ENCODE measurements at regions of chr5 and their contacts with region 1.

Region 1: GRCh38 chr5:59380350-59380951 is 513.1 kb downstream of the PDE4D start:
- DNase-seq: no peak
- H3K4me3 ChIP-seq: no peak overlapping the region
- H3K27ac ChIP-seq: peak overlapping the region in 1 of 2 donors; percentile 48
- H3K4me1 ChIP-seq: no peaks in the 10 kb centered on the region
- H3K27me3 ChIP-seq: no peaks in the 10 kb centered on the region
- CTCF ChIP-seq: peak; percentile 47 to 70 (median 60)
- POLR2A ChIP-seq: no peak

Region 2: GRCh38 chr5:59188419-59189225 is 191.8 kb before region 1 on chr5:
- intact Hi-C with region 1: loop called (anchors 5 kb)
- DNase-seq: peak; percentile 61 to 75
- H3K4me3 ChIP-seq: peak overlapping the region in 1 of 2 donors; percentile 6
- H3K27ac ChIP-seq: peak overlapping the region; percentile 50 to 62
- H3K4me1 ChIP-seq: no peaks in the 10 kb centered on the region
- H3K27me3 ChIP-seq: no peaks in the 10 kb centered on the region
- CTCF ChIP-seq: peak; percentile 67 to 87 (median 78)
- POLR2A ChIP-seq: no peak

Region 3: DNA sequence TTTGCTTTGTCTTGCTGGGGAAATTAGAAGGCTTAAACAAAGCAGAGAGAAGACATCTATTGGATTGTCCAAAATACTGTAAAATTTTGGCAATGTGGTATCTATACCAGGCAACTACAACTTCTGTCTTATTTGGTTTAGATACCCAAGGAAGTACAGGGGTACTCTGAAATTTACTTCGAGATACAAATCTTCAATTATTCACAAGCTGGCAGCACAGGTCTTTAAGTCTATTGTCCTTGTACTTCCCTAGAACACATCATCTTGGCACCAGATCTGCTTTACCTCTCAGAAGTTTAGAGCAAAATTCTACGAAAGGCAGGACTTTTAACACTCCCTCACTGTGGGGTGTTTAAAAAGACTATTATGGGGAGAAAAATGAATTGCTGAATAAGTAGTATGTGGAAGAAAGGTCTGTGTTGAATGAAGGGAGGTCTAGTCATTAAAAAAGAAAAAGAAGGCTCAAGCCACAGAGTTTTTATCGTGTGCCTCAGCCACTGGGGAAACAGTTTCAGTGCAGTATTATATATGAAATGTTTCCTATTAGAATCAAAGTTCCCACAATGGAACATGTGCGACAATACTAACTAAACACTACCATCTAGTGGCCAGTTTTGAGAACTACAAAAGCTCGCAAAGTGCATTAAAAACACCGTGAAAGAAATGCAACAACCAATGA is 419.4 kb after region 1 on chr5:
- intact Hi-C with region 1: loop called (anchors 10 kb)
- DNase-seq: no peak
- H3K4me3 ChIP-seq: no peak overlapping the region
- H3K27ac ChIP-seq: peak overlapping the region; percentile 44 to 50
- H3K4me1 ChIP-seq: no peaks in the 10 kb centered on the region
- H3K27me3 ChIP-seq: no peaks in the 10 kb centered on the region
- CTCF ChIP-seq: peak; percentile 74 to 86 (median 83)
- POLR2A ChIP-seq: no peak

Measured in uterus (tissue), 4 donors.